ENCODE measurements at regions of chr9 and their contacts with region 1.

Region 1: DNA sequence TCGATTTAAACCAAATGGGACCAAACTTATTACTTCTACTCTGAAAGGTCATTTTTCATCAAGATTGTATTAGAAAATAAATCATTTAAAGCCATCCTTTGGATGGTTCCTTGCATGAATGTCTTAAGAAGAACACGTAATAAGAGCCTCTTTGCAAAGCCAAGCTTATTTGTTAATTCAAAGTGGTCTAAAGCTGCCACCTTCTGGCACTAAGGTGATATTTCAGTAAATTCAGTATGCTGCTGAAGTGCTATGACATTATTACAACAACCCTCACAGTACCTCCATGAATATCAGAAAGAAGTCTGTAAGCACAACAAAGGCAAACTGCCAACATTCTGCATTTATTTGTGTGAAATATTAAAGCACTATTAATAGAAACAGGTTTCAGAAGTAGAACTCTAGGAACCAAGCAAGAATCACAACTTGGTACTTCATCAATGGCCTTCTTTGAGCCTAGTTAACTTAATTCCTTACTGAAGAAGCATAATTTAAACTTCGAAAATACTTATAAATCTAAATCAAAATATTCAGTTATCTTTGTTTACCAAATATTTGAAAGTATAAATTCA is 53.1 kb upstream of the TYRP1 start:
- H3K4me3 ChIP-seq: no peak overlapping the region
- H3K27ac ChIP-seq: no peak overlapping the region
- H3K4me1 ChIP-seq: no peaks in the 10 kb centered on the region
- CTCF ChIP-seq: peak; percentile 47; the same call in 1 of the 2 replicates

Region 2: DNA sequence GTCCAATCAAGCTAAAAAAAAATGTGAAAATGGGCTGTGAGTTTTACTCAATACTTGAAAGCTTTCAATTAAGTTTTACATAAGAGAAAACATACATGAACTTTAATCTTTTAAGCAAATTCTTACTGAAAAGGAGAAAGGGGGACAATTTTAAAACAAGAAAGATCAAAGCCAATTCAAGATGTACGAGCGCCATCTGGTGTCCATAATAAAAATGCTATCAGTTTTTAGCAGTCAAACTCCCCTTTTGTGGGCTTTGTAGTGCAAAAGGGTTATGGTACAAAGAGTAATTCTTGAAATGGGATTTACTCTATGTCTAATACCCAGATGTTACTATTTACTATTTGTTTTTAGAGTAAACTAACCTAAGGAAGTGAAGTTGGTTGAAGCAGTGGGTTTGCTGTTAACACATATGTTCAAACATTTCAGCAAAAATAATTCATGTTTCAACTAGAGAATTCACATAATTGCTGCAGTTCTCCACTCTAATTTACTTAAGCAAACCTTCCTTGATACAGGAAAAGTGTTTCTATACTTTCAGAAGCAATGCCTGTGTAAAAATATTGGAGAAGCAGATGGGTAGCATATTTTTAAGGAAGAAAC is 175.1 kb before region 1 on chr9:
- CTCF ChIA-PET with region 1: interaction called, 11 read pairs
- POLR2A ChIA-PET with region 1: no interaction called
- H3K4me3 ChIP-seq: no peak overlapping the region
- H3K27ac ChIP-seq: no peak overlapping the region
- H3K4me1 ChIP-seq: no peaks in the 10 kb centered on the region
- CTCF ChIP-seq: no peak

Region 3: DNA sequence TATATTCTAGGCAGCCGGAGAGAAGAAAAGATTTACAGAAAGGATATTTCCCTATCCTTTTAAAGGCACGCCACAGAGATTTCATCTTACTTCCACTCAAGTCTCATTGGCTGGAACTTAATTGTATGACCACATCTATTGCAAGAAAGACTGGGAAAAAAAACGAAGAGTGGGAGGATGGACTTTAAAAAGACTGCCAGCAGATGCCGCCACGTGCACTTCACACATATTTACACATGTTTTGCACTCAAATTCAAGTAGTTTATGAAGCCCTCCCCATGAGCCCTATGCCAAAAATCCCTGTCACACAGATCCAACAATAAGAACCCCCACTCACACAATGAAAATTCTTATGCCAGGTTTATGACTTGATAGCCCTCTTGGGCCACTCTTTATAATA is 85.5 kb before region 1 on chr9:
- CTCF ChIA-PET with region 1: interaction called, 48 read pairs
- POLR2A ChIA-PET with region 1: no interaction called
- H3K4me3 ChIP-seq: no peak overlapping the region
- H3K27ac ChIP-seq: no peak overlapping the region
- H3K4me1 ChIP-seq: no peaks in the 10 kb centered on the region
- CTCF ChIP-seq: no peak

Region 4: GRCh38 chr9:12689233-12689632 is 49.1 kb after region 1 on chr9:
- CTCF ChIA-PET with region 1: no interaction called
- POLR2A ChIA-PET with region 1: no interaction called
- H3K4me3 ChIP-seq: no peak overlapping the region
- H3K27ac ChIP-seq: no peak overlapping the region
- H3K4me1 ChIP-seq: no peaks in the 10 kb centered on the region
- CTCF ChIP-seq: no peak

Region 5: GRCh38 chr9:12748016-12748415 is 107.9 kb after region 1 on chr9:
- CTCF ChIA-PET with region 1: no interaction called
- POLR2A ChIA-PET with region 1: no interaction called
- H3K4me3 ChIP-seq: no peak overlapping the region
- H3K27ac ChIP-seq: no peak overlapping the region
- H3K4me1 ChIP-seq: no peaks in the 10 kb centered on the region
- CTCF ChIP-seq: no peak

Measured in HEK293 (cell line).